ENCODE measurements at regions of chr20 and their contacts with region 1.

Region 1: GRCh38 chr20:21031666-21032065 is 74.5 kb downstream of the LINC00237 start:
- DNase-seq: no peak
- H3K4me3 ChIP-seq: no peak overlapping the region
- H3K27ac ChIP-seq: no peak overlapping the region
- H3K4me1 ChIP-seq: no peaks in the 10 kb centered on the region
- H3K27me3 ChIP-seq: no peaks in the 10 kb centered on the region

Region 2: DNA sequence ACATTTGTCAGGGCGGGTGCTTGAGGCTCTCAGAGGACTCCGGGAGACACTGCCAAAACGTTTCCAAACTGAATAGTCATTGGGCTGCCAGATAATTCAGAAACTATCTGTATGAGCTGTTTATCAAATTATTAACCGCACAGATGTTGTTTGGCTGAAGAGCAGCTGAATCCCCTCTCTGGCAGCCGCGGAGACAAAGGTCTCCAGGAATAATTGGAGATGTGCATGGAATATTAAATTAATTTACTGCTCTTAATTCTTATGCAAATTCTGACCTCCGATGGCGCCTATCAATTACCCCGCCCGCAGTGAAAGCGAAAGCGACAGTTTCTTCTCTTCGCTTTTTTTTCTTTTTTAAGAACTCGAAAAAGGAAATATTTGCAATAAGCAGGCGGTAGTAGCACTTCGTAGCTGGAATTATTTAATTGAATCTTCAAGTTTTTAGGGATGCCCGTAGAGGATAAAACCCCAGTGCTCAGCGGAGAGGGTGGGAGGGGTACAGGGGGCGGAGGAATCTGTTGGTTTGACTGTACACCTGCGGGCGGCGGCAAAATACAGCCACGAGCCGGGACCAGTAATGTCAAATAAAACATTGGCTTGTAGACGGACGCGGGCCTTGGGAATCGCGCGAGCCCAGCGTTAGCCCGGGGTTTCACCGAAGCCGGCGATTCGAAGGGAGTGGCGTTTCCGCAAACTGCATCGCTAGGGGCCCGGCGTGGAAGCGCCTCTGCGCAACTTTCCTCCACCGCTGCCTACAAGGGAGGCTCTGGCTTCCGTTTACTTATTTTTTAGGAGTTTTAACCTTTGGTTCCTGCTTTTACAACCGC is 68.3 kb after region 1 on chr20:
- in situ Hi-C with region 1: loop called (anchors 10 kb)
- DNase-seq: no peak
- H3K4me3 ChIP-seq: 0 out of 2 replicates have a peak overlapping the region, but pooled peaks have one; percentile 25
- H3K27ac ChIP-seq: no peak overlapping the region
- H3K4me1 ChIP-seq: no peaks in the 10 kb centered on the region
- H3K27me3 ChIP-seq: peaks cover 86% of the 10 kb centered on the region

Region 3: GRCh38 chr20:21534453-21534852 is 502.8 kb after region 1 on chr20:
- in situ Hi-C with region 1: no loop called
- DNase-seq: no peak
- H3K4me3 ChIP-seq: no peak overlapping the region
- H3K27ac ChIP-seq: no peak overlapping the region
- H3K4me1 ChIP-seq: no peaks in the 10 kb centered on the region
- H3K27me3 ChIP-seq: peaks cover 12% of the 10 kb centered on the region

Region 4: GRCh38 chr20:21632031-21632734 is 600.5 kb after region 1 on chr20:
- in situ Hi-C with region 1: no loop called
- DNase-seq: no peak
- H3K4me3 ChIP-seq: no peak overlapping the region
- H3K27ac ChIP-seq: no peak overlapping the region
- H3K4me1 ChIP-seq: no peaks in the 10 kb centered on the region
- H3K27me3 ChIP-seq: no peaks in the 10 kb centered on the region